Activated CD4-positive, alpha-beta T cell treated with anti-CD3 and anti-CD28 coated beads, Interleukin-2, amount 10 ng/mL, durations not matched to agents 7 days and 5 days (primary cell): ENCODE measurements at regions of chr4 and their contacts with region 1.

Region 1: DNA sequence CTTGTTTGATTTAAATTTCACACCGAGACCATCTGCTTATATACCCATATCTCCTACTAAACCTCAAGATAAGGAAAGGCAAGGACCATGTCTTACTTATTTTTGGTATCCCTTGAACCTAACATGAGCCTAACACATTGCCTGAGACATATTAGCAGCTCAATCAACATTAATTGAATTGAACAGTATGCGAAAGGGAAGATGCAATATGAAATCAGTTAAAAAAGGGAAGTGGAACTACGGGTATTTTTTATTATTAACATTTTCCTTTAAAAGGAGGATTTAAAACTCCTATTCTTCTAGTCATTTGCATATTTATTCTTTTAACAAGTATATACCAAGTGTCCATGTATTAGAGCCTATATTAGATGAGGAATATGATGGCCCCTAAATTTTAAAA is 197.0 kb downstream of the CAMK2D start:
- DNase-seq: no peak
- H3K4me3 Mint-ChIP-seq: peak overlapping the region; percentile 26
- H3K27ac Mint-ChIP-seq: peak overlapping the region; percentile 73
- H3K4me1 Mint-ChIP-seq: peaks cover 39% of the 10 kb centered on the region
- H3K27me3 Mint-ChIP-seq: no peaks in the 10 kb centered on the region

Region 2: GRCh38 chr4:113547487-113548042 is 16.9 kb before region 1 on chr4:
- CTCF ChIA-PET with region 1: interaction called, 27 read pairs
- POLR2A ChIA-PET with region 1: interaction called, 3 read pairs
- DNase-seq: peak; percentile 94
- H3K4me3 Mint-ChIP-seq: no peak overlapping the region
- H3K27ac Mint-ChIP-seq: peak overlapping the region; percentile 54
- H3K4me1 Mint-ChIP-seq: peaks cover 18% of the 10 kb centered on the region
- H3K27me3 Mint-ChIP-seq: no peaks in the 10 kb centered on the region